ENCODE measurements at regions of chr6 and their contacts with region 1.

Region 1: GRCh38 chr6:26097268-26097875 is 10.1 kb downstream of the HFE start:
- DNase-seq: no peak
- H3K4me3 ChIP-seq: no peak overlapping the region
- CTCF ChIP-seq: peak; percentile 68

Region 2: GRCh38 chr6:25842526-25843277 is 254.7 kb before region 1 on chr6:
- CTCF ChIA-PET with region 1: no interaction called
- POLR2A ChIA-PET with region 1: no interaction called
- DNase-seq: no peak
- H3K4me3 ChIP-seq: no peak overlapping the region
- CTCF ChIP-seq: no peak

Region 3: DNA sequence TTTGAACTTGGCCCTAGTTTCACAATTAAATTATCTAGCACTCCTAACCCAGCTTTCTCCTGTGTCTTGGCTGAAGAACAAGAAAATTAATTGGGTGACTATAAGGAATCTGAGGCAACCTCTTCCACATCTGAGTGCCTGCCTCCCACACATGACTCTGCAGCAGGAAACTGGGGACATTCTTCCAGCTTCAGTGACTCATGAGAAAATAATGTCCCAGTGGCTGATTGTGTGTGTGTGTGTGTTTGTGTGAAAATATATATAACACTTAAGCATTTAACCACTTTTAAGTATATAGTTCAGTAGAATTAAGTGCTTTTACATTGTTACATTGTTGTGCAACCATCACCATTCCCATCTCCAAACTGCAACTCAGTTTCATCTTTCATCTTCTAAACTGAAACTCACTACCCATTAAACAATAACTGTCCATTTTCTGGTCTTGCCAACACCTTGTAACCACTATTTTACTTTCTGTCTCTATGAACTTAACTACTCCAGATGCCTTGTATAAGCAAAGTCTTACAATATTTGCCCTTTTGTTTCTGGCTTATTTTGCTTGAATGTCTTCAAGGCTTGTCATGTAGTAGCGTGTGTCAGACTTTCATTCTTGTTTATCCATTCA is 126.1 kb before region 1 on chr6:
- CTCF ChIA-PET with region 1: no interaction called
- POLR2A ChIA-PET with region 1: no interaction called
- DNase-seq: peak; percentile 90
- H3K4me3 ChIP-seq: no peak overlapping the region
- CTCF ChIP-seq: no peak

Region 4: DNA sequence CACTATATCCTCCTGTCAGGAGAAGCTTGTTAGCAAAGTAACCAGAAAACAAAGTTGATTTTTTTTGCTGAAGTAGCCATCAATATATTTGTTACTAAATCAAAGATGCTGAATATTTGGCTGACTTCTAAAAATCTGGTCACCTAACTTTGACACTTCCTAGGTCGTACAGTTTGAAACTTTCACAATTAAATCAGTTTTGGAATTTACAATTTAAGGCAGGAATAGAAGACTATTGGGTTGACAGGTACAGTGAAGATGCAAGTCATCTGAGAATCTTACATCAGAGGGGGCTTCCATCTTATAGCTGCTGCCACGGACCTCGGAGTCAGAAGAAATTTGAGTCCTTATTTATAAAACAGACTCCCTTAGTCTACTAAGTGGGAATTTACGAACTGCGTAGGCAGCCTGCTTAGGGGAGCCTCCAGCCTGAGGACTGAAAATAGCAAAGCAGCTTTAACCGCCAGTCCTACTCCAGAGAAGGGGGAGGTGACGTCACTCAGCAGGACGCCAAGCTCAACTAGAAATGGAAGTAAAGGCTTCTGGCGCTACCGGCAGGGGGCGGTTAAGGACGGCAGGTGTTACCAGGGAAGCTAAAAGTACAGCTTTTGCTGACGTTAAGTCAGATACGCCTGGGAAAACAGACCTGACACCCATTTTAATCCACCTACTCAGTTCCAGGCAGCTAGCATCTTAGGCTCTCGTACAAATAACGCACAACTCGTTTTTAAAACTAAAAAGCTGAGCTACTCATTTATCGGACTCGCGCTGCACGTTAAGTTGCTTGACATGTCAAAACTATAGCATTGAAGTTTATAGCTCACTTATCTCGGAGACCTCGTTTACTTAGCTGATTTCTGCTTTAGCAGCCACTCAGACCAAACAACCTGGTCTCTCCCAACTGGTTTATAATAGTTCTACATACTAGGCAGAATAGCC is 71.2 kb before region 1 on chr6:
- CTCF ChIA-PET with region 1: interaction called, 29 read pairs
- POLR2A ChIA-PET with region 1: interaction called, 4 read pairs
- DNase-seq: no peak
- H3K4me3 ChIP-seq: peak overlapping the region; percentile 84
- CTCF ChIP-seq: peak; percentile 90

Region 5: DNA sequence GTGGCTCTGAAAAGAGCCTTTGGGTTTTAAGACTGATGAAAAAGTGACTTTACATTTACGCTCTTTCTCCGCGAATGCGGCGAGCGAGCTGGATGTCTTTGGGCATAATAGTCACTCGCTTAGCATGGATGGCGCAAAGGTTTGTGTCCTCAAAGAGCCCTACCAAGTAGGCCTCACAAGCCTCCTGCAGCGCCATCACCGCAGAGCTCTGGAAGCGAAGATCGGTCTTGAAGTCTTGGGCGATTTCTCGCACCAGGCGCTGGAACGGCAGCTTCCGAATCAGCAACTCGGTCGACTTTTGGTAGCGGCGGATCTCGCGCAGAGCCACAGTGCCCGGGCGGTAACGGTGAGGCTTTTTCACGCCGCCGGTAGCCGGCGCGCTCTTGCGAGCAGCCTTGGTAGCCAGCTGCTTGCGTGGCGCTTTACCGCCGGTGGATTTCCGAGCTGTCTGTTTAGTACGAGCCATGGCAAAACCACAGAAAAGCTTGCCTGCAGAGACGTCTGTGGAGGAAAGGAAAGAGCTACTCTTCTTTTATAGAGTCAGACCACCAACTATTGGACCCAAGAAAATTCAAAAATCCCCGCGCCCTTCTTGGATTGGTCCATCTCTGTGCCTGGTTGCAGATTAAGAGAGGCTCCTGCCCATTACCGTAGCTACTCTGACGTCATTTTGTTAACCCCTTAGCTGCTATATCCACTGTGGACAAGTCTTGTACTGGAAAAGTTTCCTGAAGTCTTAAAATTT is 65.6 kb before region 1 on chr6:
- CTCF ChIA-PET with region 1: interaction called, 29 read pairs
- POLR2A ChIA-PET with region 1: interaction called, 4 read pairs
- DNase-seq: no peak
- H3K4me3 ChIP-seq: peak overlapping the region; percentile 69
- CTCF ChIP-seq: peak; percentile 20

Region 6: DNA sequence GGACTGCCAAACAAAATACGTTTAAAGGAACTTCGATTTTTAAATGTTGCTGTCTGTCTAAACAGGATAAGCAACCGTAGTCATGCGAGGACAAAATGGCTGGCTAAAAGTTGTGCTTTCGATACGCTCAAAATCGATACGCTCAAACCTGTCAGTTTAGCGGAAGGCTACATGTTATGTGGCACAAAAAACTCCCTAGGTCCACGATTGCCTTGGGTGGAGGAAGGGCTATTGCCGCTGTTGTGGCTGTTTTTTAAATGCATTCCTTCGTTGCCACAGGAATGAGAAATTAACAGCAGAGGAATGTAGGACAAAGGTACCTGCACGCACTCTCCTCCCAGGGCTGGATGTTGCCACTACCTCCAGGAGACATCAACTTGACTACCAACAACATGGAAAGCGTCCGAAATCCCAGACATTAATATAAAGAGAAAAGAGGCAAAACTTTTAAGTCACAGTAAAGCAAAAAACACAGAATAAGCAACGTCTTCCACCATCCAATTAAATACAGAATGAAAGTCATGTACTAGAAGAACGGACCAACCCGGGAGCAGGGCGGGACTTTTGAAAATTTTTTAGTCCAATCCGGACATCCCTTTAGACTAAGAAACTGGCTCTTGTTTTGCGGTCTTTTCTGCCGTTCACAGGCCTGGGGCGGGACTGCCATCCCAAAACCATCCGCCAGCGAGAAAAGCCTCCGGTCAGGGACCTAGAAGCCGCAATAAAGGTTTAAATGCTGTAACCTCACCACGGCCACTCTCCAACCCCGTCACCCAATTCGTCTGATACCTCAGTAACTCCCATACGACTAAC is 42.3 kb before region 1 on chr6:
- CTCF ChIA-PET with region 1: interaction called, 1,301 read pairs
- POLR2A ChIA-PET with region 1: no interaction called
- DNase-seq: peak; percentile 86
- H3K4me3 ChIP-seq: peak overlapping the region; percentile 72
- CTCF ChIP-seq: no peak

Region 7: DNA sequence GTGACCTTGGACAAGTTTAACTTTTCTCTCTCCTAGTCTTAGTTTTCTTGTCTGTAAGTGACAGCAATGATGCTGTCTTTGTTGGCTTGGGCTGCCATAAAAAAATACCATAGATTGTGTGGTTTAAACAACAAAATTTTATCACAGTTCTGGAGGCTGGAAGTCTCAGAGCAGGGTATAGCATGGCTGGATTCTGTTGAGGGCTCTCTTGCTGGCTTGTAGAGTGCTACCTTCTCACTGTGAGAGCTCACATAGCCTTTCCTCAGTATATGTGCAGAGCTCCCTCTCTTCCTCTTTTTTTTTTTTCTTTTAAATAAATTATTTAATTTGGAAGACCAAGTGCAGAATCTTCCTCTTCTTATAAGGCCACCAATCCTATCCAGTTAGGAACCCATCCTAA is 16.2 kb after region 1 on chr6:
- CTCF ChIA-PET with region 1: interaction called, 34 read pairs
- POLR2A ChIA-PET with region 1: no interaction called
- DNase-seq: no peak
- H3K4me3 ChIP-seq: no peak overlapping the region
- CTCF ChIP-seq: no peak

Measured in AG04449 (cell line).